Activated T-helper 1 cell treated with anti-CD3 and anti-CD28 coated beads, Interleukin-12 subunit alpha, Interleukin-12 subunit beta, Interleukin-2, Interleukin-4 antibody, amounts not matched to agents 30 ng/mL and 10 ng/mL and 1 ng/mL, durations not matched to agents 14 hours and 24 hours and 36 hours (primary cell): ENCODE measurements at regions of chr19 and their contacts with region 1.

Region 1: DNA sequence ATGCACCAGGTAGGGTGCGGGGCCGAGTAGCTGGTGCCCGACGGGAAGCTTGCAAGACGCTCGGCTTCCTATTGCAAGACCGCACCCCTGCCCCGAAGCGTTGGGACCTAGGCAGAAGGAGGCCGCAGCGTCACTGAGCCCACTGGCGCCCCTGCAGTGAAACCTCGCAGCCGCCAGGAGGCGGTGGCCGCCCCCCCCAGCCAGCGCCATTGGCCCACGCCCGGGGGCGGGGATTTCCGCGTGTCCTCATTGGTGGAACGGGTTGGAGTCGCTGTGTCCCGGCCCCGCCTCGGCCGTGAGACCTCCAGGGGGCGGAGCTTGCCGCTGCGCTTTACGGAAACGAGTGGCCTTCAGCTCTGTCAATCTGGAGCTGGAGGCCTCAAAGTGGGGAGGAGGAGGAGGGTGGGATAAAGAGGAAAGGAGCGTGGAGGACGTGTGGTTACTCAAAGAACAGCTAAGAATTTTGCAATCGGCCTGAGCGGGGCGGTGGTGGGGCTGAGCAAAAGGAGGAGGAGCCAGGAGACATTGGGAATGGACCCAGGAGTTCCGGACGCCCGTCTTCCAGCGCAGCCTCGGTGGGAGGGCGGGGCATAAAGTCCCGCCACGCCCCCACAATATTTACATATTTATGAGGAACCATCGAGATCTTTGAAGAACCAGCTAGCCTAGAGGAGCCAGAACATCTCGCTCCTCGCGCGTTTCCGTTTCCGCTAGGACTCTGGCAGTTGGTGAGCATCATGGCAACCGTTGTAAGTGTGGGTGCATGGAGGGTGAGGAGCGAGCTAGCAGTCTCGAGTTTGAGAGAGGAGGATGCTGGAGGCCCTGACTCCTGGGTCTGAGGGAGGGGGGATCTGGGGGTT is at the starts of genes GYS1 and RUVBL2:
- DNase-seq: peak; percentile 99
- H3K4me3 Mint-ChIP-seq: peak within 1 kb of the TSS; percentile 94
- H3K27ac Mint-ChIP-seq: peak within 1 kb of the TSS; percentile 96
- H3K4me1 Mint-ChIP-seq: peaks cover 38% of the 10 kb centered on the region
- H3K27me3 Mint-ChIP-seq: no peaks in the 10 kb centered on the region
- total RNA-seq, gene GYS1: 71.2 and 77.1 TPM in 2 replicates
- total RNA-seq, gene RUVBL2: 172 and 175 TPM in 2 replicates

Region 2: DNA sequence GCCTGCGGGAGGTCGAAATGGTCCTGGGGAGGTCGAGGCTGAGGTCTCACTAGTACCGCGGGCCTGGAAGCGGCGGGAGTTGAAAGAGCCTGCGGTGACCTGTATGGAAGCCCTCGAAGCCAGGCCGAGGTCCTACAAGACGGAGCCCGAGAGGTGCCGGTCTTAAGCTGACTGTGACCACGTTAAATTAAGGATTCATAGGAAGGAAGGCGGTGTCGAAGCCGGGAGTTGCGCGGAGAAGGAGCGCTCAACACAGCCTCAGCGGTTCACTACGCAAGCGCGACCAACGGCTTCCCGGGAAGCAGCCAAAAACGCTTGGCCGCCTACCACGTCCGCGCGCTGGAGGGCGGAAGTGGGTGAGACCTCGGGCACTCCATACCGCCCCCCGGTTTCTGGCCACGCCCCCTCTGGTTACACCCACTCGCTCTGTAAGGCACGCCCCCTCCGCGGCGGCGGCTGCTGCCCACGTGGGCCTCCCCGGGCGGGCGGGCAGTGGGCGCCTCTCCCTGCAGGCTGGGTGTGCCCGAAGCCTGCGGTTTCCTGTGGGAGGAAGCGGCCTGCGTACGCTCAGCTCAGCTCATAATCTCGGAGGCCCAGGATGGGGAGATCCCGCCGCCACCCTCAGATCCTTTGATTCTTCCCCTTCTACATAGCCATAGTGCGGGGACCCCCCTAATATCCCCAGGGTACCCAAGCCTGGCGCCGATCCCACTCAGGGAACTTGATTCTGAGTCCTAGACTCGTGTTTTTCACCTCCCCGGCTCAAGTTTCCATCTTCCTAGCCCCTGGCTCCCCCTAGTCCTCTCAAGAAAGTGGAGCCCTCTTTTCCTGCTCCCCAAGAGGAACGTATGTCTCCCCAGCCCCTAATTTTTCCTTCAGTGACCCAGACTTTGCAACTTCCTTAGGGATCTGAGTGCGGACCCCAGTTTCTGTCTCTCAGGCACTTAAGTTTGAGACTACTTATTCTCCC is 671.5 kb before region 1 on chr19:
- intact Hi-C with region 1: loop called (anchors 5 kb)
- DNase-seq: peak; percentile 100
- H3K4me3 Mint-ChIP-seq: peak overlapping the region; percentile 87
- H3K27ac Mint-ChIP-seq: peak overlapping the region; percentile 98
- H3K4me1 Mint-ChIP-seq: peaks cover 70% of the 10 kb centered on the region
- H3K27me3 Mint-ChIP-seq: peaks cover 2% of the 10 kb centered on the region

Region 3: GRCh38 chr19:48746738-48747575 is 246.4 kb before region 1 on chr19 and contains the start of gene IZUMO1:
- intact Hi-C with region 1: loop called (anchors 2 kb)
- DNase-seq: peak; percentile 62
- H3K4me3 Mint-ChIP-seq: peak within 1 kb of the TSS; percentile 63
- H3K27ac Mint-ChIP-seq: peak within 1 kb of the TSS; percentile 12
- H3K4me1 Mint-ChIP-seq: peaks cover 17% of the 10 kb centered on the region
- H3K27me3 Mint-ChIP-seq: peaks cover 4% of the 10 kb centered on the region
- total RNA-seq, gene IZUMO1: 0.37 TPM in 1 of 2 replicates, not detected in the other

Region 4: DNA sequence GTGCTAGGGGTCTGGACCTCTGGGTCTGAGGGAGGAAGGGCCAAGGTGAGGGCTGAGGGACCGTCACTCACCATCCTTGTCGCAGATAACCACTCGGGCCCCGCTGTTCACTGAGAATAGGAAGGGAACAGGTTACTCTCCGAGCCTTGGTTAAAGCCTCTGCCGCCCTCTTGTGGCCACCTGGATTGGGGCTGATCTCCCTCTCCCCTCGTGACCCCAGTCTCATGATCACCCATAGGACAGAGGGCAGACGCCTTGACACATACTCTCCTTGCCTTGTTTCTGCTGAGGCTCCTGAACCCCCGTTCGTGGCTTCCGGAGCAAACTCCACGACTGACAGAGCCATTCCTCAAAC is 157.7 kb before region 1 on chr19:
- intact Hi-C with region 1: loop called (anchors 1 kb)
- DNase-seq: peak; percentile 87
- H3K4me3 Mint-ChIP-seq: peak overlapping the region; percentile 84
- H3K27ac Mint-ChIP-seq: peak overlapping the region; percentile 87
- H3K4me1 Mint-ChIP-seq: peaks cover 23% of the 10 kb centered on the region
- H3K27me3 Mint-ChIP-seq: peaks cover 7% of the 10 kb centered on the region

Region 5: DNA sequence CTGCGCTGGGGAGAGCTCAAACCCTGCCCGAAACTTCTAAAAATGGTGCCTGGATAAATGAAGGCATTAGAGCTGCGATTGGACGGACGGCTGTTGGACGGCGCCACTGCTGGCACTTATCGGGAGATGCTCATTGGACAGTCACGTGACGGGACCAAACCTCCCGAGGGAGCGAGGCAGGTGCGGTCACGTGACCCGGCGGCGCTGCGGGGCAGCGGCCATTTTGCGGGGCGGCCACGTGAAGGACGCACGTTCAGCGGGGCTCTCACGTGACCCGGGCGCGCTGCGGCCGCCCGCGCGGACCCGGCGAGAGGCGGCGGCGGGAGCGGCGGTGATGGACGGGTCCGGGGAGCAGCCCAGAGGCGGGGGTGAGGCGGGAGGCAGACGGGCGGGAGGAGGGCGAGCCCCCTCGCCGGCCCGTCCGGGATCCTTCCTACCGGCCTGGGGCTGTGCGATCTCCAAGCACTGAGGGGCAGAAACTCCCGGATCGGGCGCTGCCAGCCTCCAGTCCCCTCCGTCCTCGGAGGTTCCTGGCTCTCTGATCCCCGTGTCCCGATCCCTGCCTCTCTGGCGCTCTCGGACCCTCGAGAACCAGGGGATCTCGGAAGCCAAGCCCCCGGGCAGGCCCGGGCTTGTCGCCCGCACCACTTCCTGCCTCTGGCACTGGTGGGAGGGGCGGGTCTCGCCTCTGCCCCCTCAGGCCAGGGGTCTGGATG is 38.7 kb before region 1 on chr19 and contains the start of gene BAX:
- intact Hi-C with region 1: loop called (anchors 1 kb)
- DNase-seq: peak; percentile 92
- H3K4me3 Mint-ChIP-seq: peak within 1 kb of the TSS; percentile 95
- H3K27ac Mint-ChIP-seq: peak within 1 kb of the TSS; percentile 95
- H3K4me1 Mint-ChIP-seq: peaks cover 26% of the 10 kb centered on the region
- H3K27me3 Mint-ChIP-seq: no peaks in the 10 kb centered on the region
- total RNA-seq, gene BAX: 292 and 295 TPM in 2 replicates

Region 6: GRCh38 chr19:49085020-49085867 is 91.8 kb after region 1 on chr19 and contains the start of gene SNRNP70:
- intact Hi-C with region 1: loop called (anchors 1 kb)
- DNase-seq: peak; percentile 99
- H3K4me3 Mint-ChIP-seq: peak within 1 kb of the TSS; percentile 99
- H3K27ac Mint-ChIP-seq: peak within 1 kb of the TSS; percentile 80
- H3K4me1 Mint-ChIP-seq: peaks cover 25% of the 10 kb centered on the region
- H3K27me3 Mint-ChIP-seq: peaks cover 2% of the 10 kb centered on the region
- total RNA-seq, gene SNRNP70: 259 and 272 TPM in 2 replicates

Region 7: DNA sequence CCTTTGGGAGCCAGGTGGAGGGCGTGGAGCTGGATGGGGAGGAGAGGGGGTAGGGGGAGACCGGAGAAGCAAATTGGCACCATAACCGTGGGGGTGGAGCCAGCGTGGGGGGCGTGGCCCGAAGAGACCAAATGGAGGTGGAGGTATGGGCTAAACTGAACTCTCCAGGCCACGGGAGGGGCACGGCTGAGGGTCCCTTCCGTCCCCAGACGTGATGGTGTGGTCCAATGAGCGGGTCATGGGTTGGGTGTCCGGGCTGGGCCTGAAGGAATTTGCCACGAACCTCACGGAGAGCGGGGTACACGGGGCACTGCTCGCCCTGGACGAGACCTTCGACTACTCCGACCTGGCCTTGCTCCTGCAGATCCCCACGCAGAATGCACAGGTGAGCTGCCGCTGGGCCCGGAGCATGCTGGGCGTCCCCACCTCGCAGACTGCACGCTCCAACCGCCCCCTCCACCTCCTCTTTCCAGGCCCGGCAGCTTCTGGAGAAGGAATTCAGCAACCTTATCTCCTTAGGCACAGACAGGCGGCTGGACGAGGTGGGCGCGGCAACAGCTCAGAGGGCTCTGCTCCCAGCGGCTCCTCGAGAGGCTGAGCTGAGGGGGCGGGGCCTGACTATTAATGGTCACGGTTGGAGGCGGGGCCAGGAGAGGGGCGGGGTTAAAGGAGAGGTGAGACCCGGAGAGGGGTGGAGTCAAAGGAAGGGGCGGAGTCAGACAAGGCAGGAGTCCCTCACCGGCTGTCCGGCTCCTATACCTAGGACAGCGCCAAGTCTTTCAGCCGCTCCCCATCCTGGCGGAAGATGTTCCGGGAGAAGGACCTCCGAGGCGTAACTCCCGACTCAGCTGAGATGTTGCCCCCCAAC is 155.6 kb after region 1 on chr19:
- intact Hi-C with region 1: loop called (anchors 5 kb)
- DNase-seq: peak; percentile 70
- H3K4me3 Mint-ChIP-seq: peak overlapping the region; percentile 78
- H3K27ac Mint-ChIP-seq: no peak overlapping the region
- H3K4me1 Mint-ChIP-seq: peaks cover 35% of the 10 kb centered on the region
- H3K27me3 Mint-ChIP-seq: peaks cover 59% of the 10 kb centered on the region